Right ventricle myocardium superior (tissue), 1 donor: ENCODE measurements at regions of chr18 and their contacts with region 1.

Region 1: GRCh38 chr18:62183578-62184195 is 3.2 kb downstream of the PIGN start:
- DNase-seq: no peak
- ATAC-seq: no peak

Region 2: DNA sequence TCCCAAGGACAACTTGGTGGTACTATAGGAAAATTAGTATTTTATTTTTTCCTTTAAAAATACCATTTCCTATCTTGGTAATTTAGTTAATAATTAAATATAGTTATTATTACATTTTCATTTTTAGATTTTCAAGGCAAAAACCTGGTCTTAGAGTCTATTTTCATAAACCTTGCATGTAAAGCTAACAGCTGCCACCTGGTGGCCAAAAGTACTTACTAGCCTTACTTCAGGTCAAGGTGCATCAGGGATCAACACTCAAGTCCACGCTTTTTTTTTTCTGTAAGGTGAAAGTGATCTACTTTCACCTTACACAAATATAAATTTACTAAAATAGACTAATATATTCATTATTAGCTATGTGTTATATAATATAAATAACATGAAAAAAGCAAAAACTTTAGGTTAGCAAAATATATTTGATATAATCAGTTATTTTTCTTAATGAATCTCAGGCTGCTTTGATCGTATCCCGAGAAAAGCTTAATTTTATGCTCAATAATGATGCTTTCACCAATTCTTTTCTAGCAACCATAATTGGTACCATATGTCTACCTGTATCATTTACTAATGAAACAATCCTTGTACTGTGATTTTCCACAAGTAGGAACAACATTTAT is 65.9 kb after region 1 on chr18:
- intact Hi-C with region 1: loop called (anchors 5 kb)
- DNase-seq: peak; percentile 55
- ATAC-seq: peak; percentile 43